ENCODE measurements at regions of chr5 and their contacts with region 1.

Region 1: DNA sequence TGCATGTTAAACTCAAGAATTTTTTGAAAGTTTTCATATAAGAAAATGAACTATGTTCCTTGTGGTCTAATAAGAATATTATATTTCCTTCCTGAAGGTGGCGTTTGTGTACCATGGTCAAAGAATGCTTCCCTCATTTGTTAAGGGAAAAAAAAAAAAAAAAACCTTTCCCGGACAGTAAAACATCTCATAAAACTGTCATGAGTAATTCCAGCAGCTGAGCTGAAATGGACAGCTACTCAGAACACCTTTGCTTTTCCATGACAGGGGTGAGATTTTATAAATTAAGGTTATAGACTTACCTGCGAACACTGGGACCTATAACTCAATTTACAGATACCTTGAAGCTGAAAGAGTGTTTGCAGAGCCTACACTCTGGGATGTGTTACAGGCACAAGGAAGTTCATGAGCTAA is 113.2 kb upstream of the RANBP3L start:
- DNase-seq: no peak
- H3K4me3 ChIP-seq: no peak overlapping the region
- H3K27ac ChIP-seq: no peak overlapping the region
- H3K4me1 ChIP-seq: no peaks in the 10 kb centered on the region
- H3K27me3 ChIP-seq: no peaks in the 10 kb centered on the region
- CTCF ChIP-seq: peak; percentile 45 to 49

Region 2: GRCh38 chr5:36507332-36507952 is 92.6 kb after region 1 on chr5:
- intact Hi-C with region 1: loop called (anchors 10 kb)
- DNase-seq: peak; percentile 81 to 86
- H3K4me3 ChIP-seq: no peak overlapping the region
- H3K27ac ChIP-seq: no peak overlapping the region
- H3K4me1 ChIP-seq: no peaks in the 10 kb centered on the region
- H3K27me3 ChIP-seq: peaks cover 0 to 2% of the 10 kb centered on the region in 2 donors
- CTCF ChIP-seq: peak; percentile 76 to 85

Region 3: DNA sequence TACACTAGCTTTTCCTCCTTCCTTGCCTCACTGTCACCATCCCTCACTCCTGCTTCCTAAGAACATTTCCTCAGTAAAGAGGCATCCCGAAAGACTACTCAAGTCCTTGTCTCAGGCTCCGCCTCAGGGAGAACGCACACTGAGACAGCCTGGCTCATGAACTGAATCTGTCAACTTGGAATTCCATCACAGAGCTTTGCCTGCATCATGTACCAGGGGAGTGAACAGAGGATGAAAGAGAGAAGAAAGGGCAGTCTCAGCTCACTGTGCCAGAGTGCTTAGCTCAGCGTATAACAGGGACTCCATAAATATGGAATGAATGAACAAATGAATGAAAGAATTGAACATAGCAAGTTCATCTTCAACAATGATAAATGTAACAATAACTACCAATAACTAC is 122.8 kb after region 1 on chr5:
- intact Hi-C with region 1: no loop called
- DNase-seq: no peak
- H3K4me3 ChIP-seq: no peak overlapping the region
- H3K27ac ChIP-seq: no peak overlapping the region
- H3K4me1 ChIP-seq: peaks cover 0 to 3% (median 0%) of the 10 kb centered on the region in 4 donors
- H3K27me3 ChIP-seq: no peaks in the 10 kb centered on the region
- CTCF ChIP-seq: no peak

Region 4: DNA sequence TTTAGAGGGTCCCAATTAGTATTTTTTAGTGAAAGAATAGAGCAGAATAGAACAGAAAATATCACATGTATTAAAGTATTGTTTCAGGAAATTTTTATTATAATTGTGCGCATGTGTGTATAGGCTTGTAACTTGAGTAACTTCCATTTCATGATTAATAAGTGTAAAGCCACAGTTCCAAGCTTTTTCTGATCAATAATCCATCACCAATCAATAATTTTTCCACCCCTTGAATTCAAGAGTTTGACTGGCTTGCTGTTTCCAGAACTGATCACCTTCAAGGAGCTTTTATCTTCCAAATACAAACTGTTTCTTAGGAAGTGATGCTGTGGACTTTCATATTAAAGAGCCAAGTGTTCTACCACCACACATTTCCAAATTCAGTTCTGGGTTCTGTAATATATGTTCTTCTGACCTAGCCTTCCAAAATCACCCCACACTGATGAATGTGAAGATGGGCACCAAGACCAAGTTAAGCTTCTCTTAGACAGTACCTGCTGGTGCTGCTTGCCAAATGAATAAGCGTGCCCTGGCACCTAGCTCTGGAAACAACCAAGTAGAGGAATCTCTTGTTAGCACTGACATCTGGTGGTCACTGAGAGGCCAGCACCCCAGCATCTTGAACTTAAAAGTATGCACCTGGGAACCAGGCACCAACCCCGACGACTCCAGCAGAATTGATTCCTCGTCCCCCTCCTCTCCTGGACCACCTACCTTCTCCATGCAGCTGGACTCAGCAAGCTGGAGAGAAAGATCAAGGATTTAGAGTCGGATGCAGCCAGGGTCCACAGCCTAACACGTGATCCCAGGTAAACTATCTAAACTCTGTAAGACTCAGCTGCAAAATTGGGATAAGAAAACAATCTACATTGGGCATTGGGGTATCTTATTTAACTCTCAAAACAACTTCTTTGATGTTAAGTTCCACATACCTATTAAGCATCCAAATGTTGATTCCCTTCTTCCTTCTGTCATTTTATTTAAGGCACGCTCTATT is 281.1 kb after region 1 on chr5:
- intact Hi-C with region 1: loop called (anchors 2 kb)
- DNase-seq: peak in 1 of 2 donors; percentile 40
- H3K4me3 ChIP-seq: no peak overlapping the region
- H3K27ac ChIP-seq: no peak overlapping the region
- H3K4me1 ChIP-seq: peaks cover 0 to 22% (median 13%) of the 10 kb centered on the region in 4 donors
- H3K27me3 ChIP-seq: peaks cover 0 to 4% of the 10 kb centered on the region in 2 donors
- CTCF ChIP-seq: peak; percentile 45 to 52